Ascending aorta (tissue), 2 donors: ENCODE measurements at regions of chr12 and their contacts with region 1.

Region 1: DNA sequence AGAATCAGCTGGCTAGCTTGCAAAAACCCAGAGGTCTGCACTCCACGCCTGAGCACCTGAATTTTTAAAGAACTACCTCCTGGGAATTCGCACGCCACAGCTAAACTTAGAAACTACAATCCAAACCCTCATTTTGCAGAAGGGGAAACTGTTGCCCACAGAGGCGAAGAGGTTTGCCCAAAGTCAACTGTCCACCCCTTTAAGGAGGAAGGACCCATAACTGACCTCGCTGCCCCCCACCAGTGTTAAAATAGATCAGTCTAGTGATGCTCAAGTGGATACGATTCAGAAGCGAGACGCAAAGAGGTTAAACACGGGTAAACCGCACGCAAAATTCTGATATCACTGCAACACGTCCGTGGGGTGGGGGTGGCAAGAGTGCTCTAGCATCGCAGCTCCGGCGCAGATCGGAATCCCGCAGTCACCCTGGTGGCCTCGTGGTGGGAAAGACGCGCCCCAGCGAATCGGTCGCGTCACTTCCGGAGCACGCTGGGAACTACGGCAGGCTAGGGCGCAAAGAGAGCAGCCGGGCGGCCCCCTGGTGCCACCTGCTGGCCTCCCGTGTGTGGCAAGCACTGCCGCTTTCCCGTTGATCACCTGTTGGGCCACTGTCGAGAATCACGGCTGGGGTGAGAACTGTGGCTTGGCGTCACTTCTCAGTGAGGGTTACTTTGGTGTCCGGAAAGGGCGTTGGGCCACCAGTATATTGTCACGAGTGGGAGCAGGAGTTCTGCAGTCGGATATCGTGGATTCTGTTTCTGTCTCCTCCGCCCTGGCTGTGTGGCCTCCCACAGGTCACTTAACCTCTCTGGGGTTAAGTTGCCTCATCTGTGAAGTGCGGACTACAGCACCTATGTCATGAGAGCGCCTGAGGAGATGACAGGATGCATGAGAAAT is at the start of gene ALKBH2:
- DNase-seq: peak; percentile 66 to 97
- H3K4me3 ChIP-seq: peak within 1 kb of the TSS; percentile 52 to 66
- H3K27ac ChIP-seq: peak within 1 kb of the TSS; percentile 54 to 58
- H3K4me1 ChIP-seq: peaks cover 8 to 26% of the 10 kb centered on the region in 2 donors
- H3K27me3 ChIP-seq: no peaks in the 10 kb centered on the region
- CTCF ChIP-seq: peak; percentile 93 to 99 (median 97)
- total RNA-seq, gene ALKBH2: 18.6 TPM

Region 2: GRCh38 chr12:107685360-107686248 is 1407.7 kb before region 1 on chr12 and contains the start of gene PWP1:
- intact Hi-C with region 1: loop called (anchors 10 kb)
- DNase-seq: peak; percentile 75 to 97
- H3K4me3 ChIP-seq: peak within 1 kb of the TSS; percentile 95
- H3K27ac ChIP-seq: peak within 1 kb of the TSS; percentile 66 to 72
- H3K4me1 ChIP-seq: peaks cover 0 to 10% of the 10 kb centered on the region in 2 donors
- H3K27me3 ChIP-seq: no peaks in the 10 kb centered on the region
- CTCF ChIP-seq: no peak
- total RNA-seq, gene PWP1: 57.3 TPM

Region 3: DNA sequence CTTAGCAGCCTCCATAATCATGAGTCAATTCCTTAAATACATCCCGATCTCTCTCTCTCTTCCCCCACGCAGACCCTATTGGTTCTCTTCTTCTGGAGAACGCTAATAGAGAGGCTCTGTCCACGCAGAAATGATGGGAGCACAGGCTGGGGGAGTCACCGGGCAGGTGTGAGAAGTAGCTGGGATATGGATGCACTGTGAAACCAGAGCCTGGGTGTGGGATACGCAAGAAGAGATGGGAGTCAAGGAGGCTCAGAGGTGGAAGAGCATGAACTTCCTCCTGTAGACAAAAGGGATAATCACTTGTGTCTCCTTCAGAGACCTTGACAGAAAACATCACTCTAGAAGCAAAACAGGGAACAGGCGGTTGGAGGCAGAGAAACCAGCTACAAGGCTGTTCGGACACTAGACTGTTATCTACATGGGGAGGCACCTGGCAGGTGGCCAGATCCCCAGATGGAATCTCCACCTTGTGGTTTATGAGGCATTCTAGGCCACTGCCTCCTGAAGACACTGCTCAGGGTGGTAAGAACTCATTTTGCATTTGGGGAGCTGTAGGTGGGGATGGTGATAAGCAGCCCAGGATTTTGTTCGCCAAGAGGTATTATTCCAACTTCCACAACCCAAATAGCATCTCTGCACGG is 452.3 kb before region 1 on chr12:
- intact Hi-C with region 1: loop called (anchors 10 kb)
- DNase-seq: no peak
- H3K4me3 ChIP-seq: no peak overlapping the region
- H3K27ac ChIP-seq: no peak overlapping the region
- H3K4me1 ChIP-seq: peaks cover 13 to 26% of the 10 kb centered on the region in 2 donors
- H3K27me3 ChIP-seq: no peaks in the 10 kb centered on the region
- CTCF ChIP-seq: no peak

Region 4: GRCh38 chr12:109052414-109053323 is 40.6 kb before region 1 on chr12 and contains the start of gene USP30:
- intact Hi-C with region 1: loop called (anchors 1 kb)
- DNase-seq: peak; percentile 25 to 88
- H3K4me3 ChIP-seq: peak within 1 kb of the TSS; percentile 71 to 96
- H3K27ac ChIP-seq: peak within 1 kb of the TSS; percentile 67 to 81
- H3K4me1 ChIP-seq: peaks cover 0 to 15% of the 10 kb centered on the region in 2 donors
- H3K27me3 ChIP-seq: no peaks in the 10 kb centered on the region
- CTCF ChIP-seq: no peak
- total RNA-seq, gene USP30: 36.0 TPM

Region 5: DNA sequence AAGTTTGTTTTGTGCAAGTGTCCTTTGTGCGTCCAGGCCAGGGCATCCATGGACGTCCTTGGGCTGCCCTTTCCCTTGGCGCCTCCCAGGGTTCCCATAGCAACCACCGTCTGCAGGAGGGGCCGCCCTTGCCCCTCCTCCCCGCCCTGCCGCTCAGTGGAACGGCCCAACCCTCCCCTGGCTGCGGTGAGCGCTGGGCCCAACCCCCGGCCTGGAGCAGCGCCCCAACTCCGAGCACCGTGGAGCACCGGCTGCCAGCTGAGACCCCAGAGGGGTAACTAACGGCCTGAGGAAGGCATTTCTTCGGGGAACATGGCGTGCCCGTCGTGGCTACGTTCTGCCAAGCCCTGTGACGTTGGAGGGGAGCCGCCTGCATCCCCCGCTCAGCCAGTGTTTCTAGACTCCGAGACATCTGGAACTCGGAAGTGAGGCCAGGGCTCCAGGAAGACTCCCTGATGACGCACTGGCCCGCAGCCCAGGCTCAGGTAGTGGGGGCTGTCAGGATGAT is 17.8 kb after region 1 on chr12:
- intact Hi-C with region 1: loop called (anchors 1 kb)
- DNase-seq: peak; percentile 56 to 93
- H3K4me3 ChIP-seq: peak overlapping the region; percentile 69 to 77
- H3K27ac ChIP-seq: peak overlapping the region; percentile 92 to 93
- H3K4me1 ChIP-seq: peaks cover 2 to 19% of the 10 kb centered on the region in 2 donors
- H3K27me3 ChIP-seq: no peaks in the 10 kb centered on the region
- CTCF ChIP-seq: no peak